Activated CD8-positive, alpha-beta T cell treated with anti-CD3 and anti-CD28 coated beads, Interleukin-2, amount 10 ng/mL, durations not matched to agents 7 days and 5 days (primary cell): ENCODE measurements at regions of chr11 and their contacts with region 1.

Region 1: GRCh38 chr11:14907411-14908213 is 15.6 kb upstream of the CYP2R1 start:
- DNase-seq: peak; percentile 89
- ATAC-seq: peak; percentile 68
- H3K4me3 Mint-ChIP-seq: no peak overlapping the region
- H3K27ac Mint-ChIP-seq: no peak overlapping the region
- H3K4me1 Mint-ChIP-seq: peaks cover 54% of the 10 kb centered on the region
- H3K27me3 Mint-ChIP-seq: no peaks in the 10 kb centered on the region

Region 2: DNA sequence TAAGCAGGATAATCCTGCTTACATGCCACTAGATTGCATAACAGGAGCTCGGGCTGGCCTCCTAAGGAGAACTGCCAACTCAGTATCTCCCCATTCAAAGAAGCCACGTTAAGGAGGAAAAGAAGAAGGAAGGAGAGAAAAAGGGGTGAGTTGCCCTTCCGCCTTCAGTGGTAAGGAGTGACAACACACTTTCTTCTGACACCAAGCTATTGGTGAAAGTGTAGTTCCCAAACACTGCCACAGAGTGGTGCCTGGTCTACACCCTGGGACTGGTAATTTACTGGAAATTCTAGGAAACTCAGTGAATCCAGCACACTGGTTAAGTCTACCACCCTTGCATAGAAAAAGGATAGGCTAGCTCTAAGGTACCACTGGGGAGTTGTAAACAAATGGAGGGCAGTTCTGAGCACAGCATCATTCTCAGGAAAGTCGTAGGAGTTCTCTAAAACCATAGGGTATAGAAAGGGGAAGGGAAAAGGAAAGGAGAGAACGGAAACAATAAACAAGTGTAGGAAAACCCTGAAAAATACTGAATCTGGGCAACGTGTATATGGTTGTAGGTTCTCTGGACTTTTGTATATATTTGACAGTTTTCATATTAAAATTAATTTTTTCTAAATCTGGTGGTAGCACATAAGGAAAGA is 606.8 kb before region 1 on chr11:
- CTCF ChIA-PET with region 1: interaction called, 20 read pairs
- POLR2A ChIA-PET with region 1: interaction called, 5 read pairs
- DNase-seq: peak; percentile 67
- ATAC-seq: peak; percentile 89
- H3K4me3 Mint-ChIP-seq: no peak overlapping the region
- H3K27ac Mint-ChIP-seq: no peak overlapping the region
- H3K4me1 Mint-ChIP-seq: peaks cover 36% of the 10 kb centered on the region
- H3K27me3 Mint-ChIP-seq: no peaks in the 10 kb centered on the region

Region 3: GRCh38 chr11:14578541-14578956 is 329.1 kb before region 1 on chr11:
- CTCF ChIA-PET with region 1: interaction called, 18 read pairs
- POLR2A ChIA-PET with region 1: no interaction called
- DNase-seq: peak; percentile 84
- ATAC-seq: peak; percentile 97
- H3K4me3 Mint-ChIP-seq: peak overlapping the region; percentile 42
- H3K27ac Mint-ChIP-seq: peak overlapping the region; percentile 90
- H3K4me1 Mint-ChIP-seq: peaks cover 56% of the 10 kb centered on the region
- H3K27me3 Mint-ChIP-seq: no peaks in the 10 kb centered on the region

Region 4: DNA sequence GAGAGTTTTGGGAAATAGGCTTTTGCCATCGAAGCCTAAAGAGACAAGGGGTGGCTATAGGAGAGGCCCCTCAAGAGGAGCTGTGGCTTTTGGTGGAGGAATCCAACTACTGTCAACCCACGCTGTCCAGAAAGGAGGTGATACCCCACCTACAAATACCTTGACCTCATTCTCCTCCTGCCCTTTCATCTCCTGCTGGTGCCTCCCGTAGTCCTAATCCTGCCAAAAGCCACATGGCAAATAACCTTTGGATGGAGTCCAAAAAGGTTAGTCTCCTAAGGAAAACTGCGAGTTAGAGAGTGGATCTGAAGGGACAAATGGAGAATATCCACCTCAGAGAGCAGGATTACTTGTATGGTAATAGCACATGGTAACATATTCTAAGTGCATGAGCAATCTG is 151.3 kb before region 1 on chr11:
- CTCF ChIA-PET with region 1: interaction called, 10 read pairs
- POLR2A ChIA-PET with region 1: no interaction called
- DNase-seq: no peak
- ATAC-seq: no peak
- H3K4me3 Mint-ChIP-seq: no peak overlapping the region
- H3K27ac Mint-ChIP-seq: no peak overlapping the region
- H3K4me1 Mint-ChIP-seq: peaks cover 48% of the 10 kb centered on the region
- H3K27me3 Mint-ChIP-seq: no peaks in the 10 kb centered on the region

Region 5: DNA sequence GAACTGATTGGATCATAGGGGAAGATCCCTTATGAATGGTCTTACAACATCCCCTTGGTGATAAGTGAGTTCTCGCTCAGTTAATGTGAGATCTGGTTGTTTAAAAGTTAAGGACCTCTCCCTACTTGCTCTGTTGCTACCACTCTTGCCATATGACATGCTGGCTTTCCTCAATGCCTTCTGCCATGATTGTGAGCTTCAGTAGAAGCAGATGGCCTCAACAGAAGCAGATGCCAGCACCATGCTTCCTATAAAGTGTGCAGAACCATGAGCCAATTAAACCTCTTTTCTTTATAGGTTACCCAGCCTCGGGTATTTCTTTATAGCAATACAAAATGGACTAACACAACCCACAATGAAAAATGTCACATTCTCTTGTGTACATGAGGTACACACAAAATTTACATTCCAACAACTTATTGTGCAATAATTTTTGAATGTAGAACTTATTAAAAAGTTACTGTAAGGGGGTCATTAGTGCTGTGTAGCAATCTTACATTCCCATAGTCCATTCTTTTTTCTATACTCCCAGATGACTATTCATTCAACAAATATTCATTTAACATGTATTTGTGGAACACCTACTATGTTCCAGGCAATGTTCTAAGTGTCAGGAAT is 25.9 kb before region 1 on chr11:
- CTCF ChIA-PET with region 1: interaction called, 11 read pairs
- POLR2A ChIA-PET with region 1: no interaction called
- DNase-seq: no peak
- ATAC-seq: no peak
- H3K4me3 Mint-ChIP-seq: no peak overlapping the region
- H3K27ac Mint-ChIP-seq: no peak overlapping the region
- H3K4me1 Mint-ChIP-seq: peaks cover 10% of the 10 kb centered on the region
- H3K27me3 Mint-ChIP-seq: no peaks in the 10 kb centered on the region

Region 6: GRCh38 chr11:14974515-14975251 is 67.1 kb after region 1 on chr11:
- CTCF ChIA-PET with region 1: interaction called, 74 read pairs
- POLR2A ChIA-PET with region 1: no interaction called
- DNase-seq: peak; percentile 76
- ATAC-seq: peak; percentile 71
- H3K4me3 Mint-ChIP-seq: peak overlapping the region; percentile 65
- H3K27ac Mint-ChIP-seq: no peak overlapping the region
- H3K4me1 Mint-ChIP-seq: peaks cover 31% of the 10 kb centered on the region
- H3K27me3 Mint-ChIP-seq: peaks cover 74% of the 10 kb centered on the region

Region 7: DNA sequence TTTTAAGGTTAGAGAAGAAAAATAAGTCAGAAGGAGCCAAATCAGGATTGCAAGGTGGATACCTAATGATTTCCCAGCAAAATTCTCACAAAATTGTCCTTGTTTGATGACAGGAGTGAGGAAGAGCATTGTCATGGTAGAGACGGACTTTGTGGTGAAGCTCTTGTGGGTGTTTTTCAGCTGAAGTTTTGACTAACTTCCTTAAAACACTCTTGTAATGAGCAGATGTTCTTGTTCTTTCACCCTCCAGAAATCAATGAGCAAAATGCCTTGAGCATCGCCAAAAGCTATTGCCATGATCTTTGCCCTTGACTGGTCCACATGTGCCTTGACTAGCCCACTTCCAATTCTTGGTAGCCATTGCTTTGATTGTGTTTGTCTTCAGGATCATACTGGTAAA is 185.8 kb after region 1 on chr11:
- CTCF ChIA-PET with region 1: interaction called, 38 read pairs
- POLR2A ChIA-PET with region 1: no interaction called
- DNase-seq: no peak
- ATAC-seq: no peak
- H3K4me3 Mint-ChIP-seq: no peak overlapping the region
- H3K27ac Mint-ChIP-seq: no peak overlapping the region
- H3K4me1 Mint-ChIP-seq: no peaks in the 10 kb centered on the region
- H3K27me3 Mint-ChIP-seq: peaks cover 28% of the 10 kb centered on the region

Region 8: GRCh38 chr11:15379483-15379882 is 471.9 kb after region 1 on chr11:
- CTCF ChIA-PET with region 1: no interaction called
- POLR2A ChIA-PET with region 1: no interaction called
- DNase-seq: no peak
- ATAC-seq: no peak
- H3K4me3 Mint-ChIP-seq: no peak overlapping the region
- H3K27ac Mint-ChIP-seq: no peak overlapping the region
- H3K4me1 Mint-ChIP-seq: no peaks in the 10 kb centered on the region
- H3K27me3 Mint-ChIP-seq: no peaks in the 10 kb centered on the region